ENCODE measurements at regions of chr9 and their contacts with region 1.

Region 1: DNA sequence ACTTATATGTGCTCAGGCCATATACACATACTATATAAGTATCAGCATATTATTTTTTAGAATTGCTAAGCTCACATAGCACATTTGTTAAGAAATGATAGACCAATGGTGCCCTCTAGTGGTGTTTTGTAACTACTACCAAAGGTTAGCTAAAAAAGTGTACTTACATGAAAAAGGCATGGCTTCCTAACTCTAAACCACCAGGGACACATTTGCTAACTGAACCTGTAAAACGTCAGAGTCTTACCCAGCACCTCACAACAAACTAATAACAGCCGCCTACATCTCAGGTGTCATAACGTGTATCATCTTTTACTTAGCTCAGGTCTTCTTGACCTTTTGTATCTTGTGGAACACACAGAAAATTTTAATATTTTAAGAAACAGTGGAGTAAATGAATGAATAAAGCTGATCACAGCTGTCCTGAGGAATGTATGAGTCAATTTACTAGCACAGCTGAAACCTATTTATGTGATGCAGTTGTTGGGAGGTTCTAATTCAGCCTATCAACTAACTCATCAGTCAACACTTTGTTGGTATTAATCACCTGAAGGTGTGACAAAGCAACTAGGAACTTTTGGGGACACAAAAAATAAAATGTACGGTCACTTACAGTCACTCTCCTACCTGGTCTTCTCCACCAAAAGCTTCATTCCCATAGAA is 72.9 kb downstream of the BAAT start:
- DNase-seq: peak; percentile 76
- H3K4me3 ChIP-seq: no peak overlapping the region
- H3K27ac ChIP-seq: no peak overlapping the region
- H3K4me1 ChIP-seq: no peaks in the 10 kb centered on the region
- H3K27me3 ChIP-seq: peaks cover 0 to 4% of the 10 kb centered on the region in 2 experiments
- CTCF ChIP-seq: peak; percentile 24 to 33
- POLR2A ChIP-seq: no peak

Region 2: DNA sequence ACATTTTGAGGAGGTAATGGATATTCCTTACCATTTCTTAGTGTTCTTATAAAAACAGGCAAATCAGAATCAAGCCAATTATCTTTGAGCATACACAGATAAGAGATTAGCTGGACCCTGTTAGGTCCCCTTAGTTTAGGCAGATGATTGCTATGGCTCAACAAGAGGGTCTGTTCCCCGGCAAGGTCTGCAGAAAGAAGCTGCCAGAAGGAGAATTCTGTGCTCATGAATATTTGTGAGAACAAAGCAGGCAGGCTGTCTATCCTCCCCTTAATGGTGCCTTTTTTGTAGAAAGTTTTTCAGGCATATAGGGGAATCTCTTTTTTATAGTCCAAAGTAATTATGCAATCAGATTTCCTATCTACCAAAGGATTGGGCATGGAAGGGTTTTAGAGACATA is 706.5 kb before region 1 on chr9:
- CTCF ChIA-PET with region 1: interaction called, 428 read pairs
- POLR2A ChIA-PET with region 1: no interaction called
- dilution Hi-C with region 1: no loop called
- intact Hi-C with region 1: loop called (anchors 1 kb)
- DNase-seq: no peak
- H3K4me3 ChIP-seq: no peak overlapping the region
- H3K27ac ChIP-seq: no peak overlapping the region
- H3K4me1 ChIP-seq: no peaks in the 10 kb centered on the region
- H3K27me3 ChIP-seq: peaks cover 5 to 14% of the 10 kb centered on the region in 2 experiments
- CTCF ChIP-seq: no peak
- POLR2A ChIP-seq: no peak

Region 3: GRCh38 chr9:100700689-100701318 is 611.1 kb before region 1 on chr9:
- CTCF ChIA-PET with region 1: interaction called, 98 read pairs
- POLR2A ChIA-PET with region 1: no interaction called
- dilution Hi-C with region 1: no loop called
- intact Hi-C with region 1: loop called (anchors 1 kb)
- DNase-seq: peak; percentile 38
- H3K4me3 ChIP-seq: no peak overlapping the region
- H3K27ac ChIP-seq: no peak overlapping the region
- H3K4me1 ChIP-seq: no peaks in the 10 kb centered on the region
- H3K27me3 ChIP-seq: no peaks in the 10 kb centered on the region
- CTCF ChIP-seq: peak; percentile 42 to 54
- POLR2A ChIP-seq: no peak

Region 4: GRCh38 chr9:100714372-100715099 is 597.4 kb before region 1 on chr9:
- CTCF ChIA-PET with region 1: interaction called, 158 read pairs
- POLR2A ChIA-PET with region 1: no interaction called
- dilution Hi-C with region 1: no loop called
- intact Hi-C with region 1: loop called (anchors 1 kb)
- DNase-seq: peak; percentile 57
- H3K4me3 ChIP-seq: no peak overlapping the region
- H3K27ac ChIP-seq: no peak overlapping the region
- H3K4me1 ChIP-seq: no peaks in the 10 kb centered on the region
- H3K27me3 ChIP-seq: no peaks in the 10 kb centered on the region
- CTCF ChIP-seq: peak; percentile 80 to 81
- POLR2A ChIP-seq: no peak

Region 5: GRCh38 chr9:101130054-101130453 is 181.8 kb before region 1 on chr9:
- CTCF ChIA-PET with region 1: no interaction called
- POLR2A ChIA-PET with region 1: no interaction called
- dilution Hi-C with region 1: no loop called
- intact Hi-C with region 1: no loop called
- DNase-seq: no peak
- H3K4me3 ChIP-seq: no peak overlapping the region
- H3K27ac ChIP-seq: no peak overlapping the region
- H3K4me1 ChIP-seq: no peaks in the 10 kb centered on the region
- H3K27me3 ChIP-seq: peaks cover 2% of the 10 kb centered on the region in 2 experiments
- CTCF ChIP-seq: no peak
- POLR2A ChIP-seq: no peak

Region 6: GRCh38 chr9:101235105-101235866 is 76.6 kb before region 1 on chr9:
- CTCF ChIA-PET with region 1: interaction called, 16 read pairs
- POLR2A ChIA-PET with region 1: no interaction called
- dilution Hi-C with region 1: no loop called
- intact Hi-C with region 1: no loop called
- DNase-seq: peak; percentile 58
- H3K4me3 ChIP-seq: no peak overlapping the region
- H3K27ac ChIP-seq: no peak overlapping the region
- H3K4me1 ChIP-seq: no peaks in the 10 kb centered on the region
- H3K27me3 ChIP-seq: no peaks in the 10 kb centered on the region
- CTCF ChIP-seq: peak; percentile 14 to 38
- POLR2A ChIP-seq: no peak

Region 7: DNA sequence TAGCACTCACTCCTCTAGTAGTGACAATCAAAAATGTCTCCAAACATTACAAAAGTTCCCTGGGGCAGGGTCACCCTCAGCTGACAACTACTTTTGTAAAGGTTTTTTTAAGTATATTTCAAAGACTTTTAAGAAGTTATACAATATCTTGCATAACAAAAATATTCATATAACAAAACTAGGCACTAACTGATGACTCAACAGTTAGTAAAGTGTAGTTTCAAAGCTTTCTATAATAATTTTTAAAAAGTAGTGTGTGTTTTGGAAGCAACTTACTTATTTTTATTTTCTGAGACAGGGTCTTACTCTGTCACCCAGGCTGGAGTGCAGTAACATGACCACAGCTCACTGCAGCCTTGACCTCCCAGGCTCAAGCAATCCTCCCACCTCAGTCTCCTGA is 12.0 kb before region 1 on chr9:
- CTCF ChIA-PET with region 1: interaction called, 28 read pairs
- POLR2A ChIA-PET with region 1: no interaction called
- dilution Hi-C with region 1: no loop called
- intact Hi-C with region 1: no loop called
- DNase-seq: no peak
- H3K4me3 ChIP-seq: no peak overlapping the region
- H3K27ac ChIP-seq: no peak overlapping the region
- H3K4me1 ChIP-seq: no peaks in the 10 kb centered on the region
- H3K27me3 ChIP-seq: no peaks in the 10 kb centered on the region
- CTCF ChIP-seq: no peak
- POLR2A ChIP-seq: no peak

Region 8: GRCh38 chr9:101639785-101640665 is 328.1 kb after region 1 on chr9:
- CTCF ChIA-PET with region 1: no interaction called
- POLR2A ChIA-PET with region 1: no interaction called
- dilution Hi-C with region 1: no loop called
- intact Hi-C with region 1: no loop called
- DNase-seq: no peak
- H3K4me3 ChIP-seq: no peak overlapping the region
- H3K27ac ChIP-seq: no peak overlapping the region
- H3K4me1 ChIP-seq: no peaks in the 10 kb centered on the region
- H3K27me3 ChIP-seq: no peaks in the 10 kb centered on the region
- CTCF ChIP-seq: no peak
- POLR2A ChIP-seq: no peak

Measured in endothelial cell of umbilical vein (primary cell).